H1 (cell line): ENCODE measurements at regions of chr10 and their contacts with region 1.

Region 1: GRCh38 chr10:73252445-73253224 is at the start of gene MRPS16:
- DNase-seq: peak; percentile 88 to 91
- H3K4me3 ChIP-seq: peak within 1 kb of the TSS; percentile 90 to 99 (median 97)
- H3K27ac ChIP-seq: peak within 1 kb of the TSS; percentile 91
- H3K4me1 ChIP-seq: peaks cover 0 to 4% (median 3%) of the 10 kb centered on the region in 4 experiments; a peak in 4 of 7 replicates
- H3K27me3 ChIP-seq: no peaks in the 10 kb centered on the region
- CTCF ChIP-seq: peak in 1 of 3 experiments; percentile 8; a peak in 1 of 4 replicates
- EP300 ChIP-seq: no peak
- POLR2A ChIP-seq: peak; percentile 82 to 97
- RAD21 ChIP-seq: no peak
- total RNA-seq, gene MRPS16: 125 TPM in 2 replicates

Region 2: DNA sequence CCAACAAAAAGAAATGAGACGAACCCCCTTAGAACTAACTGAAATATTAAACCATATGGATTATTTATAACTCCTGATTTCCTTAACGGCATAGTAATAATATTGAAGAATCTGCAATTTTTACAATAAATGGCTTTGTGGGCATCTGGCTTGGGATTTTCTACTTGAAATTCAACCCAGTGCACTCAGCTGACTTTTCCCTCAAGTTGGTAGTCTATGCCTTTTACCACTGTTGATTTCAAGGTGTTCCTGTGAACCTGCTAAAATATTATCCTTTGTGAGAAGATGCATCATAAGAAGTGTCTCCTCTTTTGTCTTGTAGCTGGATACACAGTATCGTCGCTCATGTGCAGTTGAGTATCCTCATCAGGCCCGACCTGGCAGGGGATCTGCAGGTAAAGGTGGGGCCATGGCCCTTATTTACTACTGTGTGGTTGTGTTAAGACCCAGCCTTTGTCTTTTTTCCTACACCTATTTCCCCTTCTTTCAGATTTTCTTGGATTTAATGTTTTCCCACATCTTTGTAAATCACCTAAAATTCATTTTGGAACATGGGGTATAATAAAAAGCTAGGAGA is 13.6 kb before region 1 on chr10:
- CTCF ChIA-PET with region 1: interaction called, 4 read pairs
- POLR2A ChIA-PET with region 1: interaction called, 62 read pairs
- DNase-seq: no peak
- H3K4me3 ChIP-seq: no peak overlapping the region
- H3K27ac ChIP-seq: no peak overlapping the region
- H3K4me1 ChIP-seq: no peaks in the 10 kb centered on the region
- H3K27me3 ChIP-seq: no peaks in the 10 kb centered on the region
- CTCF ChIP-seq: no peak
- EP300 ChIP-seq: no peak
- POLR2A ChIP-seq: no peak
- RAD21 ChIP-seq: no peak

Region 3: DNA sequence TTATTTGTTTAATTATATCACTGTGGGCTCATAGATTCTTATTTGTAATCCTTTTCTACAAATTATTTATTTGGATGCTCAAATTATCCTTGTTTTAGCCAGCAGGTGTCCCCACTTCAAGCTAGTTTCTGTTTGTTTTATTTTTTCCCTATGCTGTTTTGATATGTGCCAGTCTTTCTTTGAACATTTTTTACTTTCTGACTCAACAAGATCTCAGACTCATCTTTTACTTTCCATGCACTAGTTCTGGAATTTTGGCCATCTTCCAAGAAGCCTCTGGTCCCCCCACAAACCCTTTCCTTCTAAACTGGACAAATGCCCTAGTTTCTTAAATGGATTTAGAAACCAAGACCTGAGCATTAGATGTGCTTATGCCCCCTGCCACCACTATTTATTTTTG is 11.3 kb after region 1 on chr10:
- CTCF ChIA-PET with region 1: interaction called, 18 read pairs
- POLR2A ChIA-PET with region 1: interaction called, 8 read pairs
- DNase-seq: no peak
- H3K4me3 ChIP-seq: no peak overlapping the region
- H3K27ac ChIP-seq: no peak overlapping the region
- H3K4me1 ChIP-seq: no peaks in the 10 kb centered on the region
- H3K27me3 ChIP-seq: no peaks in the 10 kb centered on the region
- CTCF ChIP-seq: peak in 1 of 3 experiments; percentile 21; a peak in 2 of 4 replicates
- EP300 ChIP-seq: no peak
- POLR2A ChIP-seq: no peak
- RAD21 ChIP-seq: peak; percentile 35 to 40; a peak in 3 of 4 replicates

Region 4: GRCh38 chr10:73364964-73365363 is 112.3 kb after region 1 on chr10:
- CTCF ChIA-PET with region 1: no interaction called
- POLR2A ChIA-PET with region 1: no interaction called
- DNase-seq: no peak
- H3K4me3 ChIP-seq: no peak overlapping the region
- H3K27ac ChIP-seq: no peak overlapping the region
- H3K4me1 ChIP-seq: no peaks in the 10 kb centered on the region
- H3K27me3 ChIP-seq: no peaks in the 10 kb centered on the region
- CTCF ChIP-seq: no peak
- EP300 ChIP-seq: no peak
- POLR2A ChIP-seq: no peak
- RAD21 ChIP-seq: no peak

Region 5: GRCh38 chr10:73413528-73414229 is 161.0 kb after region 1 on chr10 and contains the start of gene ANXA7:
- CTCF ChIA-PET with region 1: no interaction called
- POLR2A ChIA-PET with region 1: interaction called, 21 read pairs
- DNase-seq: peak; percentile 62 to 95
- H3K4me3 ChIP-seq: peak within 1 kb of the TSS; percentile 88 to 99 (median 92)
- H3K27ac ChIP-seq: peak within 1 kb of the TSS; percentile 91
- H3K4me1 ChIP-seq: peaks cover 2 to 8% (median 4%) of the 10 kb centered on the region in 4 experiments; a peak in 5 of 7 replicates
- H3K27me3 ChIP-seq: no peaks in the 10 kb centered on the region
- CTCF ChIP-seq: peak in 1 of 3 experiments; percentile 1; a peak in 1 of 4 replicates
- EP300 ChIP-seq: no peak
- POLR2A ChIP-seq: peak; percentile 79 to 80
- RAD21 ChIP-seq: no peak
- total RNA-seq, gene ANXA7: 59.9 and 63.6 TPM in 2 replicates